MCF 10A (cell line): ENCODE measurements at regions of chr13 and their contacts with region 1.

Region 1: DNA sequence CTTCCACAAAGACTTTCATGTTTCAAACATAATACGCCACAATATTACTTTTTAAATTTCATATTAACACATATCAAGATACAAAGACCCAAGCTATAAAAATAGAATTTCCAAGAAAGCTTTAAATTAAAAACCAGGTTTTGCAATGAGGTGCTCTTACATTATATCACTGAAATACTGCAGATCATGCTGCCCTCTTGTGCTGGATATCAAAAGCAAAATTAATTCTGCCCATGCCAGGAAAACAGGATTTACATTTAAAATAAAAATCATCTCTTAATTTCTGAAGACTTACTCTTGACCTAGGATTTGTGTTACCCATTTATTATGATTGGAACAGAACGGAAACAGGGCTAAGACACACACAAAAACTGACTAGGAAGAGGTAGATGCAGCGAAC is 145.0 kb downstream of the ABCC4 start:
- DNase-seq: peak; percentile 29
- H3K4me3 Mint-ChIP-seq: no peak overlapping the region
- H3K27ac Mint-ChIP-seq: no peak overlapping the region
- H3K4me1 Mint-ChIP-seq: peaks cover 7% of the 10 kb centered on the region
- H3K27me3 Mint-ChIP-seq: no peaks in the 10 kb centered on the region
- CTCF ChIP-seq: peak; percentile 62

Region 2: DNA sequence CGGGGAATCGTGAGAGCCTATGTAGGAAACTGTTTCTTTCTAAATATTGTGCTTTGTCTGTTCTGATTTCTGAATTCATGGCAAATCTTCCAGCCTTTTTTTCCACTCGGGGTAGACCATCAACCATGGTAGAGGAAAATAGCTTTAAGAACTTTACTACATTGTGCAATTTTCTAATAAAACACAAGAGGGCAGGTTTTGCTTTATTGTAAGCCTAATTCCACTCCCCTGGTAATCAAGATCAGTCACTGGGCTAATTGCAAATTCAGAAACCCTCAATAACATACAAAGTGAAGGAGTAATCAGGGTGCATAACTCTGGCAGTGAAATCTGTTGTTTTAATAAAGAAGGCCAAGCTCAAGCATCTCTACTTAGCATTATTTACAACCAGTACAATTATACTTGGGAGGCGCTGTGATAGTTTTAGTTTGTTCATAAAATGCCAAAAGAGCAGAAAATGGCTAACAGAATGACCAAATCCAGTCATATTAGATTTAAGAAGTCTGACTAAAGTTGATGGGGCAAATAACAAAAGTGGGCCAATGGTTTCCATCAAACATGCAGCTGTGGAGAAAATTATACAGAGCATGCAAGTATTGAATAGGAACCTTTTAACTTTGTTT is 720.5 kb before region 1 on chr13:
- CTCF ChIA-PET with region 1: interaction called, 13 read pairs
- POLR2A ChIA-PET with region 1: no interaction called
- intact Hi-C with region 1: loop called (anchors 5 kb)
- DNase-seq: peak; percentile 55
- H3K4me3 Mint-ChIP-seq: no peak overlapping the region
- H3K27ac Mint-ChIP-seq: no peak overlapping the region
- H3K4me1 Mint-ChIP-seq: no peaks in the 10 kb centered on the region
- H3K27me3 Mint-ChIP-seq: peaks cover 20% of the 10 kb centered on the region
- CTCF ChIP-seq: peak; percentile 63

Region 3: DNA sequence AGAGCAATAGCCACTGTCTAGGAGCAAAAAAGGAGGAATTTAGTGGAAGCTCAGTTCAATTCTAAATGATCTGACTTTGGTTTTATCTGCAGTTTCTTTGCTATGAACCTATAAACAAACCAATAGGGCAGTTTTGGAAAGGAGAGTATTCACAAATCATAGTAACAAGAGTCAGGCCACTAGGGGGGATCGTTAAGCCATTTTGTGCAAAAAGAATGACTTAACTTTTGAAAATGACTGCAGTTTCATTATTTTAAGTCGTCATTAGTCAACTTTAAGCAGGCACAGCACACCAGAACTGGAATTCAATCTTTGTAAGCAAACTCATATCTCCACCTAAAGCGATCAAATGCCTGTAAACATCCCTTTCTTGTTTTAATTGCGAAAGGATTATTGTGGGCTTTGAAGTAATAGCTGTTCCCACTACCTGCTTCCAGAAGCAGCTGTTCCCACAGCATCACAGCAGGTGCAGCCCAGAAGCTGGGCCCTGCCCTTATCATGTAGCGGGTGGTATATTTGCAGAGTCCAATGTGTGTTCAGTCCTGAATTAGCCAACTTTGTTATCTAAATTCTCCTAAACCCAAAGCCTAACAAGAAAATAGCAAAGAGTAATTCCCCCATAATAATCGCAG is 495.4 kb before region 1 on chr13:
- CTCF ChIA-PET with region 1: interaction called, 6 read pairs
- POLR2A ChIA-PET with region 1: no interaction called
- intact Hi-C with region 1: loop called (anchors 1 kb)
- DNase-seq: peak; percentile 24
- H3K4me3 Mint-ChIP-seq: no peak overlapping the region
- H3K27ac Mint-ChIP-seq: no peak overlapping the region
- H3K4me1 Mint-ChIP-seq: peaks cover 15% of the 10 kb centered on the region
- H3K27me3 Mint-ChIP-seq: no peaks in the 10 kb centered on the region
- CTCF ChIP-seq: peak; percentile 15

Region 4: GRCh38 chr13:94716016-94716415 is 440.2 kb before region 1 on chr13:
- CTCF ChIA-PET with region 1: interaction called, 7 read pairs
- POLR2A ChIA-PET with region 1: no interaction called
- intact Hi-C with region 1: loop called (anchors 2 kb)
- DNase-seq: no peak
- H3K4me3 Mint-ChIP-seq: no peak overlapping the region
- H3K27ac Mint-ChIP-seq: no peak overlapping the region
- H3K4me1 Mint-ChIP-seq: no peaks in the 10 kb centered on the region
- H3K27me3 Mint-ChIP-seq: peaks cover 11% of the 10 kb centered on the region
- CTCF ChIP-seq: peak; percentile 16

Region 5: GRCh38 chr13:95133498-95133897 is 22.7 kb before region 1 on chr13:
- CTCF ChIA-PET with region 1: interaction called, 15 read pairs
- POLR2A ChIA-PET with region 1: no interaction called
- intact Hi-C with region 1: no loop called
- DNase-seq: no peak
- H3K4me3 Mint-ChIP-seq: no peak overlapping the region
- H3K27ac Mint-ChIP-seq: no peak overlapping the region
- H3K4me1 Mint-ChIP-seq: peaks cover 3% of the 10 kb centered on the region
- H3K27me3 Mint-ChIP-seq: no peaks in the 10 kb centered on the region
- CTCF ChIP-seq: no peak